ENCODE measurements at regions of chr3 and their contacts with region 1.

Region 1: DNA sequence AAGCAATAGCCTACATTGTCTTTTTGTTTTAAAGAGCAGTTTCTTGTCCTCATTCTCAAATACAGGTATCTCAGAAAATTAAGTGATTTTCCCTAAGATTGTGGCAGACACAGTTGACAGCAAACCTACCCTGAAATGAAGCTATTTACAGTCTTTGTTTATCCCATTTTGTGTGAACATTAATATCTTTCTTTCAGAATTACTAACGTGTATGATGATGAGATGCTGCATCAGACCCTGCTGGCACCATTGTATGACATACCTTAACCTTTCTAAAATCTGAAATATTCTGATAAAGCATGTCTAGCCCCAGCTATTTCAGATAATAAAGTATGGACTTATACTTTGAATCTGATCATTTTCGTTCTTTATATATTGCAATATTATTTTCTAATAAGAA is 185.9 kb downstream of the RSRC1 start:
- DNase-seq: no peak
- ATAC-seq: no peak
- H3K4me3 ChIP-seq: no peak overlapping the region
- H3K27ac ChIP-seq: no peak overlapping the region
- H3K4me1 ChIP-seq: no peaks in the 10 kb centered on the region
- H3K27me3 ChIP-seq: no peaks in the 10 kb centered on the region
- CTCF ChIP-seq: no peak
- POLR2A ChIP-seq: no peak

Region 2: DNA sequence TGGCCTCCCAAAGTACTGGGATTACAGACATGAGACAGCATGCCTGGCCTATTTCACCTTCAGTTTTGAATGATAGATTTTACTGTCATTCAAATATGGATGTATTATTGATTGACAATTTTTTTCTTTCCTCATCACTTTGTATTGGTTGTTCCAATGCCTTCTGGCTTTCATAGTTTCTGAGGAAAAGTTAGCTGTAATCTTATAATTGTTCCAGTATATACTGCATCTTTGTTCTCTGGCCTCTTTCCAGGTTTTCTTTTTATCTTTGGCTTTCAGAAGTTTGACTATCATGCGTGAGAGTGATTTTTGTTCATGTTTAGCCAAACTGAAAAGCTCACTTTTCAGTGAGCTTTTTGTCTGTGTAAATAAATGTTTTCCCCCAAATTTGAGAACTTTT is 28.8 kb before region 1 on chr3:
- intact Hi-C with region 1: loop called in 1 of 10 experiments (anchors 2 kb)
- DNase-seq: no peak
- ATAC-seq: no peak
- H3K4me3 ChIP-seq: no peak overlapping the region
- H3K27ac ChIP-seq: no peak overlapping the region
- H3K4me1 ChIP-seq: no peaks in the 10 kb centered on the region
- H3K27me3 ChIP-seq: no peaks in the 10 kb centered on the region
- CTCF ChIP-seq: no peak
- POLR2A ChIP-seq: no peak

Region 3: DNA sequence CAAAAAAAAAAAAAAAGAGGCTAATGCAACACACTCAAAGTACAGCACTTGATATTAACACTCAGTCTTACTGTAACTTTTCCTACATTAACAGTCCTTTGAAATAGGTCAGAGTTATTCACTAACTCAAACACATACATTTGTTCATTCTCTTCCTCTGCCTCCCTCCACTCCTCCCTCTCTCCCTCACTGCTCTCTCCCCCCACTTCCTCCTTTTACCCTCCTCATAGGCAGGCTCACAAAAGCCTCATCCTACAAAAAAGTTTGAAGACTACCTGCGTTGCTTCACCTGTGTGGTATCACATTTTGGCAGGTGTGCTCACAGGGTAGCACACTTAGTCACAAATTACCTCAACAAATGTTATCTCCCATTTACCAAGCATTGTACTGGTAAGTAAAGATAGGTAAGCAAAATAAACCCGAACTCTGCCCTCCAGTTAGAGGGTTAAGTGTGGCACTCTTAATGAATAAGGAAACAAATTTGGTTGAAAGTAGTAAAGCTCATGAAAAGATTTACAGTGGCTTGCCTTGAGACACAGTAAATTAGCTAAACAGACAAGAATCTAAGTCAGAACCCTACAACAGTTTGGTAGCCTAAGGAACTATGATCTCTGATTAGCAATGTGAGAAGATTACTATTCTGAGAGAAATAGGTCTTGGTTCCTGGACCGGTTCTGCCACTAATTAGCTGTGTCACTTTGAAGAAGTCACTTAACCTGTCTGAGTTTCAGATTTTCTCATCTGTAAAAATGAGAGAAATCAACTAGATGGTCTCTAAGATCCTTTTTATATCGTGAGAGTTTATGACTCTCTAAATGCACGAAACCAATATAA is 124.3 kb after region 1 on chr3:
- intact Hi-C with region 1: loop called in 1 of 10 experiments (anchors 10 kb)
- DNase-seq: no peak
- ATAC-seq: no peak
- H3K4me3 ChIP-seq: no peak overlapping the region
- H3K27ac ChIP-seq: no peak overlapping the region
- H3K4me1 ChIP-seq: no peaks in the 10 kb centered on the region
- H3K27me3 ChIP-seq: no peaks in the 10 kb centered on the region
- CTCF ChIP-seq: no peak
- POLR2A ChIP-seq: no peak

Measured in heart left ventricle (tissue), 16 donors.